ENCODE measurements at regions of chr5 and their contacts with region 1.

Region 1: GRCh38 chr5:10856683-10857337 is 95.8 kb upstream of the DAP start:
- DNase-seq: peak; percentile 45 to 96 (median 80)

Region 2: DNA sequence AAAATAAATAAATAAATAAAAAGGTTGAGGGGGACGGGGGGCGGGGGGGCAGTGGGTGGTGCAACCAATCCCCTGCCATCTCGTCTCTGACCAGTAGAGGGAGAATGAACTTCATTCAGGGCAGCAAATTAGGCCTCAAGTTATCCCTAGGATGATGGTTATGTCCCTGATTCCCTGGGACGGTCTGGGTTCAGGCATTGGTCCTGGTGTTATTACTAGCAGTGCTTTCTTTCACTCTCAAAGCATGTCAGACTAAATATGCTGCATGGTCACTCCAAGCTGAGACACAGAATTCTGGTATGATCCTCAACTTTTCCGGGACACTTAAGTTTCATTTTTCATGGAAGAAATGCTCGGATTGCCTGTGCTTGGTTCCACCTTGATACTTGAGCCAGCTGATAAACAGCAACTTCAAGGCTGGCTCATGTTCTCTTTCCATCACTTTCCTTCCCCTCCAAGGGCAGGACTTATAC is 155.2 kb before region 1 on chr5:
- intact Hi-C with region 1: loop called (anchors 10 kb)
- DNase-seq: peak in 3 of 10 donors; percentile 20 to 51 (median 38)

Region 3: GRCh38 chr5:11046160-11046559 is 189.3 kb after region 1 on chr5:
- intact Hi-C with region 1: loop called (anchors 2 kb)
- DNase-seq: peak in 4 of 10 donors; percentile 17 to 89 (median 50)

Region 4: DNA sequence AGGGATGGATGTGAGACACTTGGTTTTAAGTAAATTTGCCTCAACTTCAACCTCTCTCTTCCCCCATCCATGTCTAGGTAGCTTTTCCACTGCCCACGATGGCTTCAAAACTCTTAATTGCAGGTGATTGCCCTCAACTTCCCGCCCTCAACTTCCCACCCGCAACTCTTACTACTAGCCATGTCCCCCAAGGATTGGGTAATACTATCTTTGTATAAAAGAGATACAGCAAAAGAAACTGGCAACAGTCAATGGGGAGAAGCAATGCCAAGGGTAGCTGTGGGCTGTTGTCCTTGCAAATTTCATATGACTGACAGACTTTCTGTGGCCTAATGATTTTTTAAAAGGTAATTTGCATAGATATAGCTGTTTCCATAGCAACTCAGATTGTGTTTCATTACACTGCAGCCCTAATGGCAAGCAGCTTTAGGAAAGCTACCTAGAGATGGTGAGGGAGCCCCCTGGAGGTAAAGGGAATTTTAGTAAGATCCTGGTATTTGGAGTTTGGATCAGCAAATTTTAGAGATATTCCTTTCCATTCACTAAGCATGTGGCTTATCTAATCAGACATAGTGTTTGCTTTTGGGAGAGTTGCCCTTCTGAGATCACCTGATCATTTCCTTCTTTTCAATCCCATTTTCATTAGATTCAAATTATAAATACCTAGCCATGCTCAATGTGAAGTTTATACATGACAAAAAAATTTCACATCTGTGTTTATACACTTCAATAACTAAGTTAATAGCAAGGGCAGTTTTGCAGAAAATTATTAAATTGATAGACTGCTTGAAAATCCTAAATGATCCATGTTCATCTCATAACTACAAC is 325.8 kb after region 1 on chr5:
- intact Hi-C with region 1: no loop called
- DNase-seq: no peak

Measured in posterior cingulate gyrus (tissue), 11 donors.